ENCODE measurements at regions of chr22 and their contacts with region 1.

Region 1: DNA sequence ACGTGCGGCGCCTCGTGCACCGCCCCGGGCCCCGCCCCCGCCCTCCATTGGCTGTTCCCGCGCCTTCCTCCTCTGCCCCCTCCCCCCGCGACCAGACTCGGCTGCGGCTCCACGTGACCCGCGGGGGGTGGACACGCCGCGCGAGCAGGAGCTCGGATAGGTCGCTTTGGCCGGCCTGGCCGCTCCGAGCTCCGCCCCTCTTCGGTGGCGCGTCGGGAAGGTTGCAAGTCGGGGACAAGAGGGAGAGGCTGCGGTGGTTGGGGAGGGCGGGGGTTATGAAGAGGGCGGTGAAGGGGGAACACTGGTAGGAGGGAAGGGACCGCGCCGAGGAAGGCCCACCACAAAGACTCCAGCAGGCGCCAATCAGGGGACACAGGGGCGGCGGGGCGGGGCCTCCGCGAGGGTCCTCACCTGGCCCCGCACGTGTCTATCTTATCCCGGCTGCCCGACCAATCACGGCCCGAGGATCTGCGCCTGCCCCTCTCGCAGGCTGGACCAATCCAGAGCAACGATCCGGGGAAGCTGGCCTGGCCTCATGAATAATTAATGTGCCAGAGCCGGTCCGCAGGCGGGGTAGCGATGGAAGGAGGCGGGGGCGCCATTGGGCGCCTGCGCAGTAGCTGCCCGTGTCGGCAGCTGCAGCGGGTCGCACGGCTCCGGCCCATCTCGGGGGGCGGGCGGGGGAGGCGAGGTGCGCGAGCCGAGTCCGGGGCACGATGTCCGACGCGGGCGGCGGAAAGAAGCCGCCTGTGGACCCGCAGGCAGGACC is at the start of gene TEF:
- DNase-seq: peak; percentile 97 to 98
- H3K4me3 ChIP-seq: peak within 1 kb of the TSS; percentile 66 to 79 (median 69)
- H3K27ac ChIP-seq: peak within 1 kb of the TSS; percentile 96
- H3K4me1 ChIP-seq: peaks cover 2 to 10% (median 5%) of the 10 kb centered on the region in 4 experiments
- H3K27me3 ChIP-seq: no peaks in the 10 kb centered on the region; a peak in 1 of 7 replicates
- CTCF ChIP-seq: no peak
- EP300 ChIP-seq: no peak
- POLR2A ChIP-seq: peak; percentile 24 to 54
- RAD21 ChIP-seq: no peak
- total RNA-seq, gene TEF: 7.4 and 8.9 TPM in 2 replicates

Region 2: DNA sequence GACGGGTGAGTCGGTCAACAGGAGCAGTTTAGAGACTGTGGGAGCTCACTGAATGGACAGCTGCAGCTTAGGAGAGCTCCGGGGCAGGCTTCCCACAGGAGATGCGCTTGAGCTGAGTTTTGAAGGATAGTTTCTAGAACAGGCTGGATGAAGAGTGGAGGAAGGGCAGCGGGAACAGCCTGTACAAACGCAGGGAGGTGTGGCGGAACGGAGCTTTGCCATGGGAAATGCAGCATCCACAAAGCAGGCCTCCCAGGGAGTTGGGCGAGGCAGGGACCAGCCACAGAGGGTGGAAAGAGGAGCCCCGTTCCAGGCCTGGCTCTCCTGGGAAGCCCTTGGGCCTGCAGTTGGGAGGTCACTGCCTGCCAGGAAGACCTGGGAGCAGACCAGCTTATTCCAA is 26.5 kb before region 1 on chr22:
- CTCF ChIA-PET with region 1: interaction called, 4 read pairs
- POLR2A ChIA-PET with region 1: interaction called, 27 read pairs
- DNase-seq: no peak
- H3K4me3 ChIP-seq: no peak overlapping the region
- H3K27ac ChIP-seq: no peak overlapping the region
- H3K4me1 ChIP-seq: peaks cover 0 to 10% (median 5%) of the 10 kb centered on the region in 4 experiments; a peak in 6 of 7 replicates
- H3K27me3 ChIP-seq: no peaks in the 10 kb centered on the region
- CTCF ChIP-seq: no peak
- EP300 ChIP-seq: no peak
- POLR2A ChIP-seq: no peak
- RAD21 ChIP-seq: no peak

Region 3: GRCh38 chr22:41367039-41367679 is 14.4 kb before region 1 on chr22:
- CTCF ChIA-PET with region 1: interaction called, 5 read pairs
- POLR2A ChIA-PET with region 1: interaction called, 129 read pairs
- DNase-seq: peak in 1 of 2 experiments; percentile 66
- H3K4me3 ChIP-seq: no peak overlapping the region
- H3K27ac ChIP-seq: no peak overlapping the region
- H3K4me1 ChIP-seq: peaks cover 9 to 22% (median 15%) of the 10 kb centered on the region in 4 experiments
- H3K27me3 ChIP-seq: no peaks in the 10 kb centered on the region; a peak in 1 of 7 replicates
- CTCF ChIP-seq: no peak
- EP300 ChIP-seq: no peak
- POLR2A ChIP-seq: no peak
- RAD21 ChIP-seq: no peak

Region 4: GRCh38 chr22:41403532-41404318 is 22.2 kb after region 1 on chr22:
- CTCF ChIA-PET with region 1: interaction called, 10 read pairs
- POLR2A ChIA-PET with region 1: interaction called, 15 read pairs
- DNase-seq: peak; percentile 66 to 90
- H3K4me3 ChIP-seq: no peak overlapping the region
- H3K27ac ChIP-seq: no peak overlapping the region
- H3K4me1 ChIP-seq: peaks cover 0 to under 1% (median 0%) of the 10 kb centered on the region in 4 experiments; a peak in 1 of 7 replicates
- H3K27me3 ChIP-seq: no peaks in the 10 kb centered on the region
- CTCF ChIP-seq: peak; percentile 95 to 100 (median 99)
- EP300 ChIP-seq: no peak
- POLR2A ChIP-seq: no peak
- RAD21 ChIP-seq: peak; percentile 99

Region 5: DNA sequence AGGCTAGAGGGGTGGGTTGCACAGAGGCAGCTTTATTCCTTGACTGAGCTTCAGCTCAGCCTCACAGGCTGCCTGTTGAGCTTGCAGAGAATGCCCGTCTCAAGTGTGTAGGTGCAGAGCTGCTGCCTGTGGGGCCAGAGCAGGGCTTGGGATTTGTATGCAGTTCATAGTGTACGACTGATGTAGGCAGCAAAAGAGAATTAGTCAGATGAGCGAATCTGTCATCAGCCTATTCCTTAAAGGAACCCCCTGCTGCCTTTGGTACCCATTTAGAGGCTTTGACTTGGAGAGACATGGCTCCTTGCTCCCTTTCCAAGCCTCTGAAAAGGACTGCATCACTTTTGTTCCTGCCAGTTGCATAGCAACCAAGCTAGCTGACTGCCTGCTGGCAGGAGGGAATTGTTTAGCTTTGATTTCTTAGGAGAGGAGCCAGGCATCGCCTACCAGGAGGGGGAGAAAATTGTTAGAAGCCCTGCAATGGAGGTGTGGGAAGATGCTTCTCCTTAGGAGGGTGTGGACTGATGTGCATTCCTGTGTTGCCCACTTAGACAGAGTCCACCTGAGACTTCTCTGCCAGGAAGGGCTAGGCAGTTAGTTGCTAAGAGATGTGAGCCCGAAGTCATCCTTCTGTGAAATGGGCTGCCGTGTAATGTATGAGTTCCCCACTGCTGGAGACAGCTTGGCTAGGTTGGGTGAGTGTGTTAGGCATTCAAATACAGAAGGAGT is 98.3 kb after region 1 on chr22:
- CTCF ChIA-PET with region 1: no interaction called
- POLR2A ChIA-PET with region 1: interaction called, 18 read pairs
- DNase-seq: peak; percentile 21 to 61
- H3K4me3 ChIP-seq: peak overlapping the region in 2 of 4 experiments; percentile 0 to 11; a peak in 2 of 8 replicates
- H3K27ac ChIP-seq: peak overlapping the region; percentile 20; the same call in 1 of the 2 replicates
- H3K4me1 ChIP-seq: peaks cover 24 to 39% (median 26%) of the 10 kb centered on the region in 4 experiments
- H3K27me3 ChIP-seq: no peaks in the 10 kb centered on the region
- CTCF ChIP-seq: peak in 2 of 3 experiments; percentile 28 to 41; a peak in 2 of 4 replicates
- EP300 ChIP-seq: no peak
- POLR2A ChIP-seq: no peak
- RAD21 ChIP-seq: peak; percentile 17 to 21; a peak in 2 of 4 replicates